ENCODE measurements at regions of chr2 and their contacts with region 1.

Region 1: DNA sequence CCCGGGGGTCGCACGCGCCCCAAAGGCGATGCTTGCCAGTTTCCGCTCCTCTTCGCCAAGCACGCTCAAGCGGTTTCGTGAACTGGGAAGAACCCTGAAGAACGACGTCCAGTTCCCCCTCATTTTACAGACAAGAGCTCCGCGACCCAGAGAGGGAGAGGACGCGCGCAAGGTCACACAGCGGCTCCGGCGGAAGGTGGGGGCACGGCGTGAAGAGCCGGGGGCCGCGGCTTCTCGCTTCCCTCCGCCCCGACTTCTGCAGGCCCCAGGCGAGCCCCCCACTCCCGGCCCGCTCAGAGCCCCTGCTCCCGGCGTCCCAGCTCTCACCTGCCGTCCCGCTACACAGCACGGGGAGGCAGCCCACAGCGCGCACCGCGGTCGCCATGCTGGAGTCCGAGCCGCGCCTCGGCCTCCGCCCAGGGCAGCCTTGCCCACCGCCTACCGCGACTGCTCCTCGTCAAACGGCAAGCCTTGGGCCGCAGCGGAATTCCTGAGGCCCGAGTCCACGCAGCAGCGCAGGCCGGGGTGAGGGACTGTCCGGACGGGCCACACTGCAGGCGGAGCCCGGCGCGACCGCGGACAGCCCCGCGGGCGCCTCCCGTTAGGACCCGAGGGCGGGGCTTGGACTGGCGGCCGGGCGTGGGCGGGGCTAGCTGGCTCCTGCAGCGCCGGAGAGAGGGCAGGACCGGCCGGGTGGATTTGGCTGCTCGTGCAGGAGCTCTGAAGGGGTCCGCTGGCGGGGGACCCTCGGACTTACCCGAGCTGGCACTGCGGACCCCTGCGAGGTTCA is at the start of gene MRPS5:
- DNase-seq: peak; percentile 62
- ATAC-seq: peak; percentile 97
- H3K4me3 ChIP-seq: peak within 1 kb of the TSS; percentile 76 to 96 (median 94)
- H3K27ac ChIP-seq: peak within 1 kb of the TSS; percentile 87
- H3K4me1 ChIP-seq: peaks cover 44% of the 10 kb centered on the region
- H3K27me3 ChIP-seq: no peaks in the 10 kb centered on the region; a peak in 1 of 5 replicates
- CTCF ChIP-seq: peak; percentile 40
- EP300 ChIP-seq: 0 out of 4 replicates have a peak, but pooled peaks of 1 of the 2 experiments have one; percentile 41
- POLR2A ChIP-seq: peak; percentile 70 to 96; a peak in 3 of 4 replicates
- RAD21 ChIP-seq: peak; percentile 68; the same call in 1 of the 2 replicates
- total RNA-seq, gene MRPS5: 98.8 and 102 TPM in 2 replicates

Region 2: DNA sequence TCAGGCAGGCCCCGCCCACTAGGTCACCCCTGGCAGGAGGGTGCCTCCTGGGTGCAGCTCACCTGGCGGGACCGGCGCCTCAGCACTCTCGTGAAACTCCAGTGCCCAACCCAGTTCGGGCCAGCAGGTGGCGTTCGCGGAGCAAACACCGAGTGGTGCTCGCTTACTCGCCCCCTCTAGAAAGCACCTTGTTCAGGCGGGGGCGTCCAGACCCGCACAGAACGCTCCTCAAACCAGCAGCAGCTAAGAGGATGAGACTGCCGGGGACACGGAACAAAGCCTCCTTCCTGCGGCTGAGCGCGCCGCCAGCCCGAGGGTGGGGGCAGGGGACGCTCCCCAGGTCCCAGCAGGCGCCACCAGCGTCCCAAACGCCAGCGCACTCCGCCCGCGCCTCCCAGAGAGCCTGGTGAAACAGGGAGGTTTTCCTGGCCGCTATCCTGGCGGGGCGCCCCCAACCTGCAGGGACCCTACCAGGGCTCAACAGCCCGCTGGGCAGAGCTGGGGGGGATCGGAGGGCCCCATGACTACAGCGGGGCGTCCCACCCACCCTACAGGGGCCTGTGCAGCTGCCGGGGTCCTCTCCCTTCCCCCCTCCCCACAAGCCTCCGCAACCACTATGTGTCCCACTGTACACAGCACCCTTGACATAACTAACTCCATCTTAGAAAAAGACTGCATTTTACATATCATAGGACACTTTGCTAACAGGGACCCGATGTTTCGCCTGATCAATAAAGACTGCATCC is 44.6 kb before region 1 on chr2:
- CTCF ChIA-PET with region 1: no interaction called
- POLR2A ChIA-PET with region 1: interaction called, 13 read pairs
- in situ Hi-C with region 1: no loop called
- intact Hi-C with region 1: no loop called
- DNase-seq: peak; percentile 70
- ATAC-seq: peak; percentile 92
- H3K4me3 ChIP-seq: peak overlapping the region; percentile 54 to 78 (median 60)
- H3K27ac ChIP-seq: no peak overlapping the region
- H3K4me1 ChIP-seq: peaks cover 37% of the 10 kb centered on the region
- H3K27me3 ChIP-seq: peaks cover 5 to 57% of the 10 kb centered on the region in 2 experiments; a peak in 4 of 5 replicates
- CTCF ChIP-seq: peak; percentile 98
- EP300 ChIP-seq: no peak
- POLR2A ChIP-seq: no peak
- RAD21 ChIP-seq: peak; percentile 73

Region 3: GRCh38 chr2:95159690-95160449 is 38.3 kb after region 1 on chr2 and contains the start of gene ZNF514:
- CTCF ChIA-PET with region 1: no interaction called
- POLR2A ChIA-PET with region 1: interaction called, 48 read pairs
- in situ Hi-C with region 1: no loop called
- intact Hi-C with region 1: loop called (anchors 2 kb)
- DNase-seq: peak; percentile 51
- ATAC-seq: peak; percentile 93
- H3K4me3 ChIP-seq: peak within 1 kb of the TSS; percentile 62 to 89 (median 69)
- H3K27ac ChIP-seq: peak within 1 kb of the TSS; percentile 43
- H3K4me1 ChIP-seq: peaks cover 37% of the 10 kb centered on the region
- H3K27me3 ChIP-seq: no peaks in the 10 kb centered on the region; a peak in 1 of 5 replicates
- CTCF ChIP-seq: no peak
- EP300 ChIP-seq: no peak
- POLR2A ChIP-seq: peak; percentile 29 to 63; a peak in 2 of 4 replicates
- RAD21 ChIP-seq: no peak
- total RNA-seq, gene ZNF514: 12.4 and 15.2 TPM in 2 replicates

Region 4: DNA sequence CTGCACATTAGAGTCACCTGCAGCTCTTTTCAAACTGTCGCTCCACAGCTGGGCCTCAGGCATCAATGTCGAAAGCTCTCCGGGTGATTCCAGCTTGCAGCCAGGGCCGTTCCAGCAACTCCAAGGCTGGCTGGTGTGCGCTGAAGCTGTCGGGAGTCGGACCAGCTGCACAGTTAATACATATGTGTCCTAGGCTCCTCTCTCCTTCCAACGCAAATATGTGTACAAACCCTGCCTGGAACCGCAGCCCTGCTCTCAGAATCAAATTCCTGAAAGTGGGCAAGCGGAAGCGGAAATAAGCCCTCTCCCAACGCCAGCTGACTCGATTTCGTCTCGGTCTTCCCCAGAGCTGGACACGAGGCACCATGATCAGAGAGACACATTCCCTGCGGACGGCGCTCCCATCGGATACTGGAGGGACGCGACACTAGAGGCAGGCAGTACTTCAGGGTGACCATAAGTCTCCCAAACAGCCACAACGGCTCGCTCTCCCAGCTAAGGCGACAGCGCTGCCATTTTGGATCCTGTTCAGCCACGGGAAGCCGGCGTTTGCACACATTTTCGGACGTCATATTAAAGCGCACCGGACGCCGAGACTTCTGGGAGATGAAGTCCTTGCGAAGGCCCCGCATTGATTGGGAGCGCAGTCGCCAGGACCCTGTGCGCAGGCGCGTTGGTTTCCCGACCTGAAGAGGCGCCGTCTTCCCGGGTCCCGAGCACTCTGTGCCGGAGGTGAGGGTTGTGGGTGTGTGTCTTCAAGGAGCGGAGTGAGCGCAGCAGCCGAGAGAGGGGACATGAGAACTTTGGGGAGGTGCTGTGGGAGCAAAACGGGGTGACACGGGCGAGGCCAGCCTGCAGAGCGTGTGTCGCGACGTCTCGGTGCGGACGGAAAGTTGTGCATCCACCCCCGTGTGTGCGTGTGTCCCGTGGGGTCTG is 43.8 kb after region 1 on chr2 and contains the start of gene ZNF2:
- CTCF ChIA-PET with region 1: no interaction called
- POLR2A ChIA-PET with region 1: interaction called, 48 read pairs
- in situ Hi-C with region 1: no loop called
- intact Hi-C with region 1: loop called (anchors 2 kb)
- DNase-seq: peak; percentile 98
- ATAC-seq: peak; percentile 96
- H3K4me3 ChIP-seq: peak within 1 kb of the TSS; percentile 82 to 98 (median 91)
- H3K27ac ChIP-seq: peak within 1 kb of the TSS; percentile 94
- H3K4me1 ChIP-seq: peaks cover 24% of the 10 kb centered on the region
- H3K27me3 ChIP-seq: no peaks in the 10 kb centered on the region; a peak in 1 of 5 replicates
- CTCF ChIP-seq: peak; percentile 29
- EP300 ChIP-seq: 0 out of 4 replicates have a peak, but pooled peaks of 1 of the 2 experiments have one; percentile 46
- POLR2A ChIP-seq: peak; percentile 95 to 98
- RAD21 ChIP-seq: peak; percentile 54; the same call in 1 of the 2 replicates
- total RNA-seq, gene ZNF2: 6.1 and 8.5 TPM in 2 replicates

Measured in HepG2 (cell line).